AG04450 (cell line): ENCODE measurements at regions of chr12 and their contacts with region 1.

Region 1: GRCh38 chr12:77925536-77926108 is 94.9 kb downstream of the NAV3 start:
- DNase-seq: peak; percentile 84
- H3K4me3 ChIP-seq: no peak overlapping the region; the same call in 1 of the 2 replicates
- H3K27ac ChIP-seq: no peak overlapping the region
- H3K27me3 ChIP-seq: no peaks in the 10 kb centered on the region
- CTCF ChIP-seq: peak; percentile 100

Region 2: DNA sequence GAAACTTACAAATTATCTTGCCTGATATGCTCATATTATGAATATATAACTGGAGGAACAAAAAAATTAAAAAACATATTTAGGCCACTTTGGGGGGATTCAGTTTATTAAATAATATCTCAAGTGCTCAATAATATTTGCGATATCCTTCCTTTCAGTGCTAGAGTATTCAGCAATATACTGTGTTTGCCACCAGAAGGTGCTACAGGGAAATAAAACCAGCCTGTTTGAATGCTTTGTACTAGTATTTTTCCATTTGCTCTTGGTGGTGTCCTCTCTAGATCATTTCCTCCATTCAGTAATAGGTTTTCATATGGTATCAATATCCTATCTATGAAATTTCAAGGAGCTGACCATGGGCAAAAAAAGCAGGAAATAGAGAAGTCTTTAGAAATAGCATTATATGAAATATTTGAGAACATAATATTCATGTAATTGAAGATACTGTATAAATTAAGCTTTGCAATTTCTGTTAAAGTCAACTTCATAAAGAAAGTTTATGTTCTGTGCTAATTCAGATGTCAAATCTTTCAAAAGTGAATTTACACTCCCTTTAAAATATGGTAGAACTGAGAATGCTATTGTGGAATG is 201.2 kb before region 1 on chr12:
- CTCF ChIA-PET with region 1: interaction called, 123 read pairs
- POLR2A ChIA-PET with region 1: no interaction called
- DNase-seq: peak; percentile 10
- H3K4me3 ChIP-seq: no peak overlapping the region
- H3K27ac ChIP-seq: no peak overlapping the region
- H3K27me3 ChIP-seq: no peaks in the 10 kb centered on the region
- CTCF ChIP-seq: peak; percentile 74

Region 3: GRCh38 chr12:77907936-77908335 is 17.7 kb before region 1 on chr12:
- CTCF ChIA-PET with region 1: interaction called, 47 read pairs
- POLR2A ChIA-PET with region 1: no interaction called
- DNase-seq: no peak
- H3K4me3 ChIP-seq: no peak overlapping the region
- H3K27ac ChIP-seq: no peak overlapping the region
- H3K27me3 ChIP-seq: no peaks in the 10 kb centered on the region
- CTCF ChIP-seq: no peak

Region 4: GRCh38 chr12:77940011-77940423 is 14.4 kb after region 1 on chr12:
- CTCF ChIA-PET with region 1: interaction called, 37 read pairs
- POLR2A ChIA-PET with region 1: no interaction called
- DNase-seq: peak; percentile 51
- H3K4me3 ChIP-seq: peak overlapping the region; percentile 58
- H3K27ac ChIP-seq: peak overlapping the region; percentile 75
- H3K27me3 ChIP-seq: no peaks in the 10 kb centered on the region
- CTCF ChIP-seq: no peak

Region 5: GRCh38 chr12:78028426-78028825 is 102.8 kb after region 1 on chr12:
- CTCF ChIA-PET with region 1: no interaction called
- POLR2A ChIA-PET with region 1: no interaction called
- DNase-seq: no peak
- H3K4me3 ChIP-seq: no peak overlapping the region
- H3K27ac ChIP-seq: no peak overlapping the region
- H3K27me3 ChIP-seq: no peaks in the 10 kb centered on the region
- CTCF ChIP-seq: no peak